ENCODE measurements at regions of chr2 and their contacts with region 1.

Region 1: DNA sequence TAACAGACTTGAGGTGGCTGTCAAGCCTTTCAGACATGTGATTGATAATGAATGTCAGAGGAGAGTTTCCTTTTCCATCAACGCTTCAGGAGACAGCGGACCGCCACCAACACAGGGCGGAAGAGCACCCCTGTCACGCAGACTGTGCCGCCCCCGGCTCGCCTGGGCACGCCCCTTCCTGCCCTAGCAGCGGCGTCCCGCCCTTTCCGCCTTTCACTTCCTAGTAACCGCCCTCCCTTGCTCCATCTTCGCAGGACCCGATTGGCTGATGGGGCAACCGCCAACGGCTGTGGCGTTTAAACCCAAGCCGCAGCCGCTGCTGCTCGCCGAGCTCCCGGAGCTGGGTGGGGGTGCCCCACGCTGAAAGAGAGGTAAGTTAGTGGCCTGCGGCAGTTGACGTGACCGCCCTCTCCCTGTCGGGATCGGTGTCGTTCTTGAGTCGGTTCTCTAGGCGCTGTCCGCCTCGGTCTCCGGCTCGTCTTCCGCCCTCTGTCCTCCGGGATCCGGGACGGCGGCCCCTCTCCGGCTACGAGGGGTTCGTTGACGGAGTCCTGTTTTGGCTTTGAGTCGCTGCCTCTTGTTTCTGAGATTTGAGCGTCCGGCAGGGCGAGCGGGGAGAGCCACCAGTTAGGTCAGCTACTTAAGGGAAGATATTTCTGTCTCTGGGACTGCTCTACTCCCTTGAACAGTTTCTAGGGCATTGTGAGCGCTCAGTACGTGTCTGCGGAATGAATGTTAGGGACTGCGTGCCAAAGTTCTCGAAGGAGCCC is at the start of gene SGO2:
- DNase-seq: peak; percentile 96
- ATAC-seq: peak; percentile 100
- H3K4me3 ChIP-seq: peak within 1 kb of the TSS; percentile 73 to 92 (median 84)
- H3K27ac ChIP-seq: peak within 1 kb of the TSS; percentile 62
- H3K4me1 ChIP-seq: peaks cover 32% of the 10 kb centered on the region
- H3K27me3 ChIP-seq: peaks cover 0 to 16% of the 10 kb centered on the region in 2 experiments; a peak in 2 of 5 replicates
- CTCF ChIP-seq: no peak
- EP300 ChIP-seq: peak in 1 of 2 experiments; percentile 8; a peak in 1 of 4 replicates
- POLR2A ChIP-seq: peak; percentile 80 to 95
- RAD21 ChIP-seq: peak; percentile 55
- total RNA-seq, gene SGO2: 16.2 and 32.2 TPM in 2 replicates

Region 2: GRCh38 chr2:200471324-200471848 is 54.7 kb before region 1 on chr2:
- CTCF ChIA-PET with region 1: no interaction called
- POLR2A ChIA-PET with region 1: no interaction called
- in situ Hi-C with region 1: no loop called
- intact Hi-C with region 1: no loop called
- DNase-seq: peak; percentile 32
- ATAC-seq: peak; percentile 42
- H3K4me3 ChIP-seq: no peak overlapping the region
- H3K27ac ChIP-seq: no peak overlapping the region
- H3K4me1 ChIP-seq: no peaks in the 10 kb centered on the region
- H3K27me3 ChIP-seq: no peaks in the 10 kb centered on the region
- CTCF ChIP-seq: peak; percentile 68
- EP300 ChIP-seq: no peak
- POLR2A ChIP-seq: no peak
- RAD21 ChIP-seq: peak; percentile 47; the same call in 1 of the 2 replicates

Region 3: GRCh38 chr2:200537600-200537999 is 11.5 kb after region 1 on chr2:
- CTCF ChIA-PET with region 1: no interaction called
- POLR2A ChIA-PET with region 1: no interaction called
- in situ Hi-C with region 1: no loop called
- intact Hi-C with region 1: loop called (anchors 2 kb)
- DNase-seq: no peak
- ATAC-seq: no peak
- H3K4me3 ChIP-seq: no peak overlapping the region
- H3K27ac ChIP-seq: no peak overlapping the region
- H3K4me1 ChIP-seq: no peaks in the 10 kb centered on the region
- H3K27me3 ChIP-seq: no peaks in the 10 kb centered on the region
- CTCF ChIP-seq: no peak
- EP300 ChIP-seq: no peak
- POLR2A ChIP-seq: no peak
- RAD21 ChIP-seq: no peak

Region 4: DNA sequence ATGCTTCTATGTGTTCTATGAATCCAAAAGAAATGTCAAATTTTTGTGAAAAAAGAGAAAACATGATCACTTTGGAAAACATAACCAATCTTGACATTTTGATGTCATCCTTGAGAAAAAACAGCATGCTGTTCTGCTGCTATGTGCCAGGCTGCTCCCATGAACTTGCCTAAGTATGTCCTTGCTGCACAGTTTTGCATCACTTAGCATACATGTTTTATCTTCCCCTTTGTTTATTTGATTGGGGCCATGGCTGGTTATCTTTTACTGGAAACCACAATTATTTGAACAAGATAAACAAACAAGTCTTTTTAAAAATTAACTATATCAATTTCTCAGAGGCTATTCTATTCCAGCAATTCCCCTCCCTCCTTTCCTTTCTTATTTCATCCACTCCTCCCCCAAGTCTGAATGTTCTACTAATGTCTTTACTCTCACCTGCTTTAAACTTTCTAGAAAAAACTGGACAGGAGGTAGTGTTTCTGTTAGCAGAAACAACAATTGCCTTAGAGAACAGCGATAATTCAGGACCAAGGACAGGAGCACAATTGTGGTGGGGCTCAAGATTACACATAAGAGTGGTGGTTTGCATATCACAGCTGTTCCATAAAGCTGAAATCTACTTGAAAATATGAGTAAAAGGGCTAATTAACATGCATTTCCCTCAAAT is 66.5 kb after region 1 on chr2:
- CTCF ChIA-PET with region 1: no interaction called
- POLR2A ChIA-PET with region 1: no interaction called
- in situ Hi-C with region 1: no loop called
- intact Hi-C with region 1: no loop called
- DNase-seq: peak; percentile 62
- ATAC-seq: peak; percentile 43
- H3K4me3 ChIP-seq: no peak overlapping the region
- H3K27ac ChIP-seq: no peak overlapping the region
- H3K4me1 ChIP-seq: peaks cover 40% of the 10 kb centered on the region
- H3K27me3 ChIP-seq: no peaks in the 10 kb centered on the region
- CTCF ChIP-seq: no peak
- EP300 ChIP-seq: 0 out of 4 replicates have a peak, but pooled peaks of 1 of the 2 experiments have one; percentile 51
- POLR2A ChIP-seq: no peak
- RAD21 ChIP-seq: no peak